ENCODE measurements at regions of chr17 and their contacts with region 1.

Region 1: DNA sequence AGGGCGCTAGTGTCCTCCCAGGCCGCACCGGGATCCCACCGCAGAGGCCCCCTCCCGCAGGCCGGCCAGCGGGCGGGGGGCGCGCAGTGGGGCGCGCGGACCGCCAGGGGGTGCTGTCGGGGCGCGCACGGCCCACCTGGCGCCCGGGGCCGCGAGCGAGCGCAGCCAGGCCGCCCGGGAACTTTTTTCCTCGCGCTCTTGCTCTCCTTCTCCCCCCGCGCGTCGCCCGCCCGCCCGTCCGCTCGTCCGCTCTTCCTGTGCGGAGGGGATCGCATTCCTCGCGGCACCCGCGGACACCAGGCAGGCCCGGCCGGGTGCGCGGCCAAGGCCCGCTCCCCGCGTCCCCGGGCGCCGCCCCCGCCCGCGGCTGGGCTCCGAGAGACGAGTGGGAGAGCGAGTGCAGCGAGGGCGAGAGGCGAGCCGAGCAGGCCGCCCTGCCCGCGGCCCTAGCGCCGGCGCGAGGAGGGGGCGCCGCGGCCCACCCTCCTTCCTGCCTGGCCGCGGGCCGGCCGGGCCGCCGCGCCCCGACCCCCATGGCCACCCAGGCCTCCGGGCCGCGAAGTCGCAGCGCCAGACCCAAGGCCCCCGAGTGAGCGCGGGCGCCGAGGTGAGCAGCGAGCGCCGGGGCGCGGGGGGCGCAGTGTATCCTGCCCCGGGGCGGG is at the start of gene RAI1:
- DNase-seq: peak; percentile 40 to 92 (median 67)
- ATAC-seq: peak; percentile 65
- H3K4me3 ChIP-seq: peak within 1 kb of the TSS; percentile 75
- H3K4me3 Mint-ChIP-seq: peak within 1 kb of the TSS; percentile 89
- H3K27ac ChIP-seq: peak within 1 kb of the TSS in 1 of 2 donors; percentile 81
- H3K27ac Mint-ChIP-seq: peak within 1 kb of the TSS; percentile 36
- H3K4me1 ChIP-seq: peaks cover 36% of the 10 kb centered on the region
- H3K4me1 Mint-ChIP-seq: peaks cover 44% of the 10 kb centered on the region
- H3K27me3 ChIP-seq: no peaks in the 10 kb centered on the region
- H3K27me3 Mint-ChIP-seq: no peaks in the 10 kb centered on the region
- CTCF ChIP-seq: peak; percentile 10
- total RNA-seq, gene RAI1: 19.3 to 25.2 TPM

Region 2: DNA sequence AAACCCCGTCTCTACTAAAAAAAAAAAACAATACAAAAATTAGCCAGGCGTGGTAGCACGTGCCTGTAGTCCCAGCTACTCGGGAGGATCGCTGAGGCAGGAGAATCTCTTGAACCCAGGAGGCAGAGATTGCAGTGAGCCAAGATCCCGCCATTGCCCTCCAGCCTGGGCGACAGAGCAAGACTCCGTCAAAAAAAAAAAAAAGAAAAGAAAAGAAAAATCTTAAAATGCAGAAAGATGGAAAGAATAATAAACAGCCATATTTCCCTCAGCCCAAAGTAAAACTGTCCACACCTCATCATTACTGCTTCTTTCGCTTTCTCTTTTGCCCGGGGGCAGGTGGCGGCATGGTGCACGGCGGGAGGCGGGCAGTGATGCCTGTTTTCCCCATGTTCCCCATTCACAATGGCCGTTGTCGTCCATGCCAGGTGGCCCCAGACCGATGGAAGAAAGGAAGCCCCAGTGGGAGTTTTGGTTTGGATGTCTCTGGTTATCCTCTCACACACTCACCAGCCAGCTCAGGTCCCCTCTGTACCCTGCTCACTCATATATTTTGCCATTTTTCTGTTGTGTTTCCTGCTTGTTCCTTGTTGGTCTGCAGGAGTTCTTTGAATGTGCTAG is 52.8 kb before region 1 on chr17:
- CTCF ChIA-PET with region 1: no interaction called
- POLR2A ChIA-PET with region 1: no interaction called
- intact Hi-C with region 1: no loop called
- DNase-seq: peak in 13 of 14 experiments; percentile 8 to 74 (median 30)
- ATAC-seq: peak; percentile 79
- H3K4me3 ChIP-seq: peak overlapping the region; percentile 56
- H3K4me3 Mint-ChIP-seq: peak overlapping the region; percentile 92
- H3K27ac ChIP-seq: peak overlapping the region in 1 of 2 donors; percentile 49
- H3K27ac Mint-ChIP-seq: peak overlapping the region; percentile 81
- H3K4me1 ChIP-seq: peaks cover 10% of the 10 kb centered on the region
- H3K4me1 Mint-ChIP-seq: peaks cover 9% of the 10 kb centered on the region
- H3K27me3 ChIP-seq: no peaks in the 10 kb centered on the region
- H3K27me3 Mint-ChIP-seq: no peaks in the 10 kb centered on the region
- CTCF ChIP-seq: no peak

Region 3: GRCh38 chr17:17702835-17703607 is 21.7 kb after region 1 on chr17:
- CTCF ChIA-PET with region 1: no interaction called
- POLR2A ChIA-PET with region 1: no interaction called
- intact Hi-C with region 1: no loop called
- DNase-seq: no peak
- ATAC-seq: no peak
- H3K4me3 ChIP-seq: no peak overlapping the region
- H3K4me3 Mint-ChIP-seq: no peak overlapping the region
- H3K27ac ChIP-seq: no peak overlapping the region
- H3K27ac Mint-ChIP-seq: no peak overlapping the region
- H3K4me1 ChIP-seq: peaks cover 13% of the 10 kb centered on the region
- H3K4me1 Mint-ChIP-seq: no peaks in the 10 kb centered on the region
- H3K27me3 ChIP-seq: no peaks in the 10 kb centered on the region
- H3K27me3 Mint-ChIP-seq: no peaks in the 10 kb centered on the region
- CTCF ChIP-seq: no peak

Region 4: DNA sequence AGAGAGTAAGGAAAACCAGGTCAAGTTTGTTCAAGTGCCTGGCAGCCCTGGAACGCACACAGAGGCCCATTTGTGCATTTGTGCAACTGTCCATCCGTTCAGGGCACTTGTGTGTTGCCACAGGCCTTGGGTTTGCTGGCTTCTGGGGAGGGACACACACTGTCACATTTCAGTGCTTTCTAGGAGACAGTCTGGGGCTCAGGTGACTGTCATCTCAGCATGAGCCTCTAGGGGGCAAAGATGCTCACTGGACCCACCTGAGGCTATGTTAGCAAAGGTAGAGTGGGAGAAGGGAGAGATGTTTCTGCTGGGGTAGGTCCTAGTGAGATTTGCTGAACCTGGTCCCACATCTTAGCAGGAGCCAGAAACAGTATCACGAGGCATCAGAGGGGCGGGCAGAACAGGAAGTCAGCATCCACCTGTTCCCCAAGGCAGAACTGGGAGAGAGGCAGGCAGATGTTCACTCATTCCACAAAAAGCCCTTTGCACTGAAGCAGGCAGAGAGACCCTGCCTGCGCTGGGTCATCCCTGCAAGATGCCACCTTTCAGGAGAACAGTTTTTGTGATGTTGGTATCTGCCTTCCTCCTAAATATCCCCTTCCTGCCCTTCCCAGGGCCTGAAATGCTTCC is 48.4 kb after region 1 on chr17:
- CTCF ChIA-PET with region 1: no interaction called
- POLR2A ChIA-PET with region 1: no interaction called
- intact Hi-C with region 1: loop called (anchors 1 to 2 kb)
- DNase-seq: peak; percentile 35 to 78 (median 60)
- ATAC-seq: peak; percentile 83
- H3K4me3 ChIP-seq: no peak overlapping the region
- H3K4me3 Mint-ChIP-seq: no peak overlapping the region
- H3K27ac ChIP-seq: no peak overlapping the region
- H3K27ac Mint-ChIP-seq: peak overlapping the region; percentile 40
- H3K4me1 ChIP-seq: peaks cover 20% of the 10 kb centered on the region
- H3K4me1 Mint-ChIP-seq: peaks cover 26% of the 10 kb centered on the region
- H3K27me3 ChIP-seq: no peaks in the 10 kb centered on the region
- H3K27me3 Mint-ChIP-seq: no peaks in the 10 kb centered on the region
- CTCF ChIP-seq: peak; percentile 77

Region 5: GRCh38 chr17:17774009-17774881 is 92.9 kb after region 1 on chr17:
- CTCF ChIA-PET with region 1: no interaction called
- POLR2A ChIA-PET with region 1: no interaction called
- intact Hi-C with region 1: loop called in 1 of 2 experiments (anchors 5 kb)
- DNase-seq: peak in 1 of 14 experiments; percentile 32
- ATAC-seq: no peak
- H3K4me3 ChIP-seq: no peak overlapping the region
- H3K4me3 Mint-ChIP-seq: no peak overlapping the region
- H3K27ac ChIP-seq: no peak overlapping the region
- H3K27ac Mint-ChIP-seq: no peak overlapping the region
- H3K4me1 ChIP-seq: no peaks in the 10 kb centered on the region
- H3K4me1 Mint-ChIP-seq: no peaks in the 10 kb centered on the region
- H3K27me3 ChIP-seq: no peaks in the 10 kb centered on the region
- H3K27me3 Mint-ChIP-seq: no peaks in the 10 kb centered on the region
- CTCF ChIP-seq: peak; percentile 28

Region 6: DNA sequence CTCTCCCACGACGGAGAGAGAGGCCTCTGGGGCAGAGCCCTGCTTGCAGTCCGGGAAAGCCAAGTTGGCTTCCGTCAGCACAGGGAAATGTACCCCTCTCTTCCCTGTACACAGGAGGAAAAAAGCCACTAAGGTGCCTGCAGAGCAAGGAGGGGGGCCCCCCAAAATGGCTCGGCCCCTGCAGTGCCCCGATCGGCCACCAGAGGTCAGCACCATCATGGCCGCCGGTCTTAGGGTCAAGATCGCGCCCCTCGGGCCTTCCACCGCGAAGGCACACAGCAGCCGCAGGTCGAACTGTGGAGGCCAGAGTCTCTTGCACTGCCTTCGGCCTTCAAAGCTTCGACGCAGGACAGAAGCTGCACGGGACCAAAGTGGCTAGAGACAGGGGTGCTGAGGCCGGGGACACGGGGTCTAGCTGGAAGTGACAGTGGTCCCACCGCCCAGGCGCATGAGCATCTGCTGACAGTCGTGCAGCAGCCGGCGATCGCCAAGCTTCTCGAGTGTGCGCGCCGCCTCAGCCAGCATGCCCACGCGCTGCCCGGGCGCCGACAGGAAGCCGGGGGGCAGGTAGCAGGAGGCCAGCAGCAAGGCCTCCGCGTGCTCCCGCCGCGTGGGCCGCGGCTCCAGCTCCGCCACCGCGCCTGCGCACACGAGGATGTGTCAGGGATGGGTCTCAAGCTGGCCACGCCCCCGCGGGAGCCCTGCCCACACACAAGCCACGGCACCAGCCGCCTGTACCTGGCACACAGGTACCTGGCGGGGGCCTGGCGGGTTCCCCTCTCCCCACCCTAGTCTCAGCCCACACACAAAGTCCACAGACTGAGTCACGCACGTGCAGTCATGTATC is 131.1 kb after region 1 on chr17:
- CTCF ChIA-PET with region 1: no interaction called
- POLR2A ChIA-PET with region 1: no interaction called
- intact Hi-C with region 1: loop called in 1 of 2 experiments (anchors 1 kb)
- DNase-seq: peak; percentile 45 to 77 (median 62)
- ATAC-seq: peak; percentile 72
- H3K4me3 ChIP-seq: no peak overlapping the region
- H3K4me3 Mint-ChIP-seq: no peak overlapping the region
- H3K27ac ChIP-seq: no peak overlapping the region
- H3K27ac Mint-ChIP-seq: peak overlapping the region; percentile 30
- H3K4me1 ChIP-seq: peaks cover 9% of the 10 kb centered on the region
- H3K4me1 Mint-ChIP-seq: peaks cover 8% of the 10 kb centered on the region
- H3K27me3 ChIP-seq: no peaks in the 10 kb centered on the region
- H3K27me3 Mint-ChIP-seq: no peaks in the 10 kb centered on the region
- CTCF ChIP-seq: peak; percentile 100

Region 7: GRCh38 chr17:17919169-17920107 is 238.1 kb after region 1 on chr17:
- CTCF ChIA-PET with region 1: interaction called, 4 read pairs
- POLR2A ChIA-PET with region 1: interaction called, 5 read pairs
- intact Hi-C with region 1: loop called (anchors 1 kb)
- DNase-seq: peak; percentile 44 to 81 (median 64)
- ATAC-seq: peak; percentile 99
- H3K4me3 ChIP-seq: no peak overlapping the region
- H3K4me3 Mint-ChIP-seq: no peak overlapping the region
- H3K27ac ChIP-seq: no peak overlapping the region
- H3K27ac Mint-ChIP-seq: no peak overlapping the region
- H3K4me1 ChIP-seq: peaks cover 9% of the 10 kb centered on the region
- H3K4me1 Mint-ChIP-seq: peaks cover 19% of the 10 kb centered on the region
- H3K27me3 ChIP-seq: no peaks in the 10 kb centered on the region
- H3K27me3 Mint-ChIP-seq: no peaks in the 10 kb centered on the region
- CTCF ChIP-seq: peak; percentile 59

Measured in CD4-positive, alpha-beta T cell (primary cell).